ENCODE measurements at regions of chr5 and their contacts with region 1.

Region 1: DNA sequence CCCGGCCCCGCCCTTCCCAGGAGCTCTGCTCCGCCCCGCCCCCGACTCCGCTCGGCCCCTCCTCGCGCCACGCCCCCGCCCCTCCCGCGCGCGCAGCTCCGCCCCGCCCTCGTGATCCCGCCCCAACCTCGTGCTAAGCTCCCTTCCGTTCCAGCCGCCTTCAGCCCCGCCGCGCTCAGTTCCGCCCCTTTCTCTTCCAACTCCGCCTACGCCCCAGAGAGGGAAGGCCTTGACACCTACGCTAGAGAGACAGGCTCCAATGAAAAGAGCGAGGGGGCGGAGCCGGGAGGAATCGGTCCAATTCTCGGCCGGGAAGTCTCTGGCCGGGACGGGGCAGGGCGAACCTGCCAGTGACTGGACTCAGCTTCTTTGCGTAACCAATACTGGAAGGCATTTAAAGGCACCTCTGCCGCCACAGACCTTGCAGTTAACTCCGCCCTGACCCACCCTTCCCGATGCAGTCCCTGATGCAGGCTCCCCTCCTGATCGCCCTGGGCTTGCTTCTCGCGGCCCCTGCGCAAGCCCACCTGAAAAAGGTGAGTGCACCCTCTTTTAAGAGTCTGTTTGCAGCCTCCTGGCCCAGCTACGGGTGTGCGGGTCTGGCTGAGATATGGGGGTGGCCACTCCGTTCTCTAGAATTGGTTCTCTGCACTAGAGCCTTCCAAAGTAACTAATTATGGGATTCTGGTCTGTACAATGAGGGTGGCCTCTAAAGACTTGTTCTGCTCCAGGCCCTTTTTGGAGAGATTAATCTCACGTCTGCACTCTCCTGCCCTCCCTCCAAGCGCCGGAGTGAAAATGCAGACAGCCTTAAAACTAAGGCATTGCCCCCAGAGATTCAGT is at the start of gene GM2A:
- DNase-seq: peak; percentile 95 to 99 (median 97)
- ATAC-seq: peak; percentile 98
- H3K4me3 ChIP-seq: peak within 1 kb of the TSS; percentile 87
- H3K4me3 Mint-ChIP-seq: peak within 1 kb of the TSS; percentile 88
- H3K27ac ChIP-seq: peak within 1 kb of the TSS; percentile 51 to 68
- H3K27ac Mint-ChIP-seq: peak within 1 kb of the TSS; percentile 92
- H3K4me1 ChIP-seq: peaks cover 42% of the 10 kb centered on the region
- H3K4me1 Mint-ChIP-seq: peaks cover 61% of the 10 kb centered on the region
- H3K27me3 ChIP-seq: no peaks in the 10 kb centered on the region
- H3K27me3 Mint-ChIP-seq: no peaks in the 10 kb centered on the region
- CTCF ChIP-seq: no peak
- total RNA-seq, gene GM2A: 3.1 to 4.1 TPM

Region 2: GRCh38 chr5:150357326-150358260 is 895.4 kb before region 1 on chr5 and contains the start of gene TCOF1:
- CTCF ChIA-PET with region 1: no interaction called
- POLR2A ChIA-PET with region 1: no interaction called
- intact Hi-C with region 1: loop called in 1 of 2 experiments (anchors 2 kb)
- DNase-seq: peak; percentile 93 to 98 (median 97)
- ATAC-seq: peak; percentile 98
- H3K4me3 ChIP-seq: peak within 1 kb of the TSS; percentile 86
- H3K4me3 Mint-ChIP-seq: peak within 1 kb of the TSS; percentile 89
- H3K27ac ChIP-seq: peak within 1 kb of the TSS in 1 of 2 donors; percentile 46
- H3K27ac Mint-ChIP-seq: peak within 1 kb of the TSS; percentile 73
- H3K4me1 ChIP-seq: peaks cover 28% of the 10 kb centered on the region
- H3K4me1 Mint-ChIP-seq: peaks cover 47% of the 10 kb centered on the region
- H3K27me3 ChIP-seq: no peaks in the 10 kb centered on the region
- H3K27me3 Mint-ChIP-seq: no peaks in the 10 kb centered on the region
- CTCF ChIP-seq: no peak
- total RNA-seq, gene TCOF1: 40.4 to 43.2 TPM

Region 3: DNA sequence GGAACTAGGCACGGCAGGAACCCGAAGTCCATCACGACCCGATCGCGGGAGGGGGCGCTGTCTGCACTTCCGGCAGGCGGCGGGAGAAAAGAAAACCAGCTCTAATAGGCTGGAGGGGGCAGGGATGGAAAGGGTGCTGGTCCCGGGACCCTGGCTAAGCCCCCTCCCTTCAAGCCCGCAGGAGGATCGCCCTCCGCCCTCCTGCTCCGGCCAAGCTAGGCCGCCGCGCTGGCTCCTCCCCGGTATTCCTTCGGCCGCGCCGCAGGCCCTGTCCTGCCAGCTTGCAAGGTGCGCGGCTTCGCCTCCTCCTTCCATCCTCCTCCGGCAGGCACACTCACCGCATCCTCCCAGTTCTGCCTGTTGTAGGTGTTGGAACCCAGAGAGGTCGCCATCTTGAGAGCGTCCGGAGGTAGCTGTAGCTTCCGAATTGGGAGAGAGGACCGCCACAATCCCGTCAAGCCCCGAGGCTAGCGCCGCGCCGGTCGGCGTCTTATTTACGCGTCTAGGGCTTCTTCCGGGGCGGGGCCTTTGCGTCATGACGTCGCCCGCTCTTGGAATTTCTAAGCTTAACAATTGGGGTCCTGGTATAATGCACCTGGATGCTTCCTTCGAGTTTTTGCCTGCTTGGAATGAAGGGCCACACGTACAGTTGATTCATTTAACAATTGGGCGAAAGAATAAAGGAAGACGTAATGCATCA is 552.2 kb before region 1 on chr5 and contains the start of gene RBM22:
- CTCF ChIA-PET with region 1: no interaction called
- POLR2A ChIA-PET with region 1: interaction called, 10 read pairs
- intact Hi-C with region 1: no loop called
- DNase-seq: peak; percentile 84 to 96 (median 90)
- ATAC-seq: peak; percentile 89
- H3K4me3 ChIP-seq: peak within 1 kb of the TSS; percentile 83
- H3K4me3 Mint-ChIP-seq: no peak within 1 kb of the TSS
- H3K27ac ChIP-seq: peak within 1 kb of the TSS; percentile 95 to 98
- H3K27ac Mint-ChIP-seq: no peak within 1 kb of the TSS
- H3K4me1 ChIP-seq: peaks cover 6% of the 10 kb centered on the region
- H3K4me1 Mint-ChIP-seq: no peaks in the 10 kb centered on the region
- H3K27me3 ChIP-seq: no peaks in the 10 kb centered on the region
- H3K27me3 Mint-ChIP-seq: no peaks in the 10 kb centered on the region
- CTCF ChIP-seq: peak; percentile 75
- total RNA-seq, gene RBM22: 98.2 to 101 TPM

Region 4: DNA sequence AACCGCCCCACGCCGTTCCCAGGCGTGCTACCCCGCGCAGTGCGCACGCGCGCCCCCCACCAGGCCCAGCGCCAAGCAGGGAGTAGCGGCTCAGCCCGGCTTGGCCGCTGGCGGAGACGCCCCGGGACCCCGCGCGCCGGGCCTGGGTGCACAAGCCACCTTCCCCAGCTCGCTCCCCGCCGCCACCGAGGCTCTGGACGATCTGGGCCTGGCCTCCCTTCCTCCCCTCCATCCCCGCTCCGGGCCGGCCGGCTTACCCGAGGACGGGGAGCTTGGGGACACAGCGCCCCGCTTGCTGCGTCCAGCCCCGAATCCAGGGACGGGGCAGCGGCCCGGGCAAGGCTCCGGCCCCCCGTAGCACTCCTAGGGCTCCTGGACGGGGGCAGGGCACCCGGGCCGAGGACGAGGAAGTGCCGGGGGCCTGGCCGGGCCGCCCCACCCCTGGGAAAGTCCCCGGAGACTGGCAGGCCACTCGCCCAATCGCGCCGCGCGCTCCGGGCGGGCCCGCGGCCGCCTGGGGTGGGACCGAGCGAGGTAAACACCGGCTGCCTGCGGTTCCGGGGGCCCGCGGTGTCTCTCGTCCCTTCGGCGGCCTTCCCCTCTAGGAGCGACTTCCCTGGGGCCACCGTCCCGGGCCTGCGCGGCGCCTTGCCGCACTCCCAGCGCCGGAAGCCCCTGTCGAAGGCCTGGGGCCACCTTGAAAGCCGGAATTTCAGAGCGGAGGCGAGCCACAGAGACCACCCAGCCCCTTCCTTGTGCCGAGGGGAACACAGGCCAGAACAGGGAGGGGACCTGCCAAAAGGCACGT is 172.2 kb before region 1 on chr5 and contains the start of gene TNIP1:
- CTCF ChIA-PET with region 1: no interaction called
- POLR2A ChIA-PET with region 1: interaction called, 4 read pairs
- intact Hi-C with region 1: loop called in 1 of 2 experiments (anchors 2 kb)
- DNase-seq: peak; percentile 86 to 97 (median 92)
- ATAC-seq: peak; percentile 78
- H3K4me3 ChIP-seq: peak within 1 kb of the TSS; percentile 85
- H3K4me3 Mint-ChIP-seq: peak within 1 kb of the TSS; percentile 97
- H3K27ac ChIP-seq: peak within 1 kb of the TSS; percentile 97
- H3K27ac Mint-ChIP-seq: peak within 1 kb of the TSS; percentile 87
- H3K4me1 ChIP-seq: peaks cover 88% of the 10 kb centered on the region
- H3K4me1 Mint-ChIP-seq: peaks cover 89% of the 10 kb centered on the region
- H3K27me3 ChIP-seq: no peaks in the 10 kb centered on the region
- H3K27me3 Mint-ChIP-seq: no peaks in the 10 kb centered on the region
- CTCF ChIP-seq: no peak
- total RNA-seq, gene TNIP1: 110 to 115 TPM

Region 5: DNA sequence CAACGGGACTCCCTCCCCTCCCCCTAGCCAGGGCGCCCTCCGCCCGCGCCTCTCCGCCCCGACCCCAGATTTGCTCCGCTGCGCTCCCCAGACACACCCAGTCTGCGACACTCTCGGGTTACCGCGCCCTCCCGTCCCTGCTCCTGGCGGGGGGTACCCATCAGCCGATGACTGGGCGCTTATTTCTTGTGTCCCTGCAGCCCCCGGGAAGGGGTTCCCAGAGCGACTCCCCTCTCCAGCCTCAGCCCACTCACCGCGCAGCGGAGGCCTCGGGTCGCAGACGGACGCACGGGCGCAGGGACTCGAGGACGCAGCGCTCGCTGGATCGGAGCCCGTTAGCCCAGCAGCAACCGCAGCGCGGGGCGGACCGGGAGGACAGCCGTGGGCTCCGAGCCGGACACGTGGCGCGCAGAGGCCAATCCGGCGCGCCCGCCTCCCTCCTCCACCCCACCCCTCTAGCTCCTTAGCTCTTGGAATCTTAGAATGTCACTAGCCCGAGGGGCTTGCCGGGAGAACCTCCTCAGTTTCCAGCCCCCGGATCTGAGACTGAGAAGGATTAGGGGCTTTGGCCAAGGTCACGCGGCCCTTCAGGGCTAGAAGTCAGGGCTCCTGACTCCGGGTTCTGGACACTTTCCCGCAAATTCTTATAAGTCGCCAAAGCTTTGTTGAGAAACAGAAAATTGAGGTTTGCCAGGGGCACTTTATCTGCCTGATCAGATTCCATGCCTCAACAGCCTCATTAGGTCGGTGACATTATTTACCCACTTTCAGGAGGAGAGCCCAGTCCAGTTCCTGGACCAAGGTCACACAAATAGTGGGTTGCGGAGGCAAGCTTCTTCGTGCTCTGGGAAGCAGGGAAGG is 95.3 kb before region 1 on chr5 and contains the start of gene ANXA6:
- CTCF ChIA-PET with region 1: no interaction called
- POLR2A ChIA-PET with region 1: interaction called, 8 read pairs
- intact Hi-C with region 1: loop called in 1 of 2 experiments (anchors 5 kb)
- DNase-seq: peak; percentile 29 to 85 (median 56)
- ATAC-seq: peak; percentile 65
- H3K4me3 ChIP-seq: peak within 1 kb of the TSS; percentile 99
- H3K4me3 Mint-ChIP-seq: peak within 1 kb of the TSS; percentile 99
- H3K27ac ChIP-seq: peak within 1 kb of the TSS; percentile 89 to 91
- H3K27ac Mint-ChIP-seq: peak within 1 kb of the TSS; percentile 91
- H3K4me1 ChIP-seq: peaks cover 57% of the 10 kb centered on the region
- H3K4me1 Mint-ChIP-seq: peaks cover 79% of the 10 kb centered on the region
- H3K27me3 ChIP-seq: no peaks in the 10 kb centered on the region
- H3K27me3 Mint-ChIP-seq: no peaks in the 10 kb centered on the region
- CTCF ChIP-seq: no peak
- total RNA-seq, gene ANXA6: 108 to 130 TPM

Region 6: DNA sequence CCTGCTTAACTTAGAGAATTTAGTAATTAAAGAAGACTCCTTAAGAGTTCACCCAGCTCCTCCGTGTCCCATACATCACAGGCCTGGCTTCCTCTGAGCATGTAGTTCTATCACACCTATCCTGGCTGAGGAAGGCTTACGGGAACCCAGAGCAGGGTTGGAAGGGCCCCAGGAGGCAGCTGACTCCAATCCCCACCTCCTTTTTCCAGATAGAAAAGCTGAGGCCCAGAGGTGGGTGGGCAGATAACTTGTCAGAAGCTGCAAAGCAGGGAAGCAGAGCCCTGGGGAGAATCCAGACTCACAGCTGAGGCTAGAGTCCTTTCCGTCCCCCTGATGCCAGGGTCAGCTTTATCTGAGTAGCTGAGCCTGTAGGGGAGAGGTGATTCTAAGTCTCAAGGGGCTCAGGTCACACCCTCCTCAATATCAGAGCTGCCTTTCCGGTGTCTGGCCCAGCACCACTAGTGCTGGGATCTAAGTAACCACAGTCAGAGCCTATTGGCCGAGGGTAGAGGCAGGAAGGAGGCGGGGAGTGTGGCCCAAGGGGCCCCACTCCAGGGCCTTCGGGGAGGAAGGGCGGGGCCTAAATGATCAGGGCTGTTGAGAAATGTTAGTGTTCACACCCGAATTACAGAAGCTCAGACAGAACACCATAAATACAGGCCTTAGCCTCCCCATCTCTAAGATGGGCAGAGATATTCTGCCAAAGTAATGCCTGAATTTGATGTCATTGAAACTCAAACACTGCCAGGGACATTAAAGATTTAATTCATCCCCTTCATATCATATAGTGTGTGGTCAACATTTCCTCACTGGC is 39.0 kb before region 1 on chr5:
- CTCF ChIA-PET with region 1: interaction called, 3 read pairs
- POLR2A ChIA-PET with region 1: interaction called, 34 read pairs
- intact Hi-C with region 1: loop called (anchors 2 to 5 kb)
- DNase-seq: peak; percentile 66 to 94 (median 86)
- ATAC-seq: peak; percentile 81
- H3K4me3 ChIP-seq: peak overlapping the region; percentile 55
- H3K4me3 Mint-ChIP-seq: peak overlapping the region; percentile 89
- H3K27ac ChIP-seq: peak overlapping the region; percentile 92 to 97
- H3K27ac Mint-ChIP-seq: peak overlapping the region; percentile 94
- H3K4me1 ChIP-seq: peaks cover 99% of the 10 kb centered on the region
- H3K4me1 Mint-ChIP-seq: peaks cover 94% of the 10 kb centered on the region
- H3K27me3 ChIP-seq: no peaks in the 10 kb centered on the region
- H3K27me3 Mint-ChIP-seq: no peaks in the 10 kb centered on the region
- CTCF ChIP-seq: no peak

Region 7: GRCh38 chr5:151758430-151759241 is 505.7 kb after region 1 on chr5 and contains the start of gene ATOX1:
- CTCF ChIA-PET with region 1: no interaction called
- POLR2A ChIA-PET with region 1: no interaction called
- intact Hi-C with region 1: loop called in 1 of 2 experiments (anchors 5 kb)
- DNase-seq: peak; percentile 84 to 96 (median 89)
- ATAC-seq: peak; percentile 98
- H3K4me3 ChIP-seq: peak within 1 kb of the TSS; percentile 95
- H3K4me3 Mint-ChIP-seq: peak within 1 kb of the TSS; percentile 97
- H3K27ac ChIP-seq: peak within 1 kb of the TSS; percentile 55 to 68
- H3K27ac Mint-ChIP-seq: peak within 1 kb of the TSS; percentile 95
- H3K4me1 ChIP-seq: peaks cover 39% of the 10 kb centered on the region
- H3K4me1 Mint-ChIP-seq: peaks cover 47% of the 10 kb centered on the region
- H3K27me3 ChIP-seq: no peaks in the 10 kb centered on the region
- H3K27me3 Mint-ChIP-seq: no peaks in the 10 kb centered on the region
- CTCF ChIP-seq: no peak
- total RNA-seq, gene ATOX1: 11.2 to 13.3 TPM

Measured in CD4-positive, alpha-beta T cell (primary cell).